ENCODE measurements at regions of chr15 and their contacts with region 1.

Region 1: DNA sequence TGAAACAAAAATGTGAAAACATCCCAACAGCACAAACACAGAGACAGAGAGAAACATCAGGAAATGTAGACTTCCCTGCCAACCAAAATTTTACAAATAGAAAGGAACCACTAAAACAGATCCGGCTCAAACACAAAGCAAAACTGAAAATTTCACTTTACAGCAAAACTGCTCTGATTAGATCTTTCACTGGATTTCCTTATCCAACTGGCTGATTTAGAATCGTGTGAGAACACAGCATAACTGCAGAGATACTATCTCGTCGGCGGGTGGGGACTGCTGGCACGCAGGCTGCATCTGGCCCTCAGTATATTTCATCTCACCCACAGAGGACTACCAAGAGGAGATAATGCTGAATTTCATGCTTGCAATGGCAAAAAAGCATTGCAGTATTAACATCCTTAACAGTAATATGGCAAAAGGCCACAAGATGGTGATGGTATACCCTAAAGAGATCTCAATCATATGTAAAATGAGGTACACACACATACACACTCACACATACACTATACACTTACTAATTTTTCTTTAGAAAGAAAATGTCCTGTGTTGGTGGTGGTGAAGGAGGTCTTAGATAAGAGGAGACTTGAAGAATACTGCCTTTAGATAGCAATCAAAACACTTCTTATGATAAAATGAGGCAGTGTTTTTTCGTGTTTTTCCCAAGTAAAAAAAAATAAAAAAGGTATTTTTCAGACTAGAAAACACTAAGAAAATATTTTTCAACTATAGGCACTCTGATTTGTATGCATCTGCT is 10.6 kb upstream of the LEO1 start:
- DNase-seq: peak in 1 of 2 experiments; percentile 47
- H3K4me3 ChIP-seq: no peak overlapping the region
- H3K4me3 Mint-ChIP-seq: peak overlapping the region; percentile 27
- H3K27ac Mint-ChIP-seq: peak overlapping the region; percentile 42
- H3K4me1 ChIP-seq: no peaks in the 10 kb centered on the region
- H3K4me1 Mint-ChIP-seq: peaks cover 8% of the 10 kb centered on the region
- H3K27me3 ChIP-seq: no peaks in the 10 kb centered on the region
- H3K27me3 Mint-ChIP-seq: no peaks in the 10 kb centered on the region
- CTCF ChIP-seq: peak; percentile 39 to 51

Region 2: DNA sequence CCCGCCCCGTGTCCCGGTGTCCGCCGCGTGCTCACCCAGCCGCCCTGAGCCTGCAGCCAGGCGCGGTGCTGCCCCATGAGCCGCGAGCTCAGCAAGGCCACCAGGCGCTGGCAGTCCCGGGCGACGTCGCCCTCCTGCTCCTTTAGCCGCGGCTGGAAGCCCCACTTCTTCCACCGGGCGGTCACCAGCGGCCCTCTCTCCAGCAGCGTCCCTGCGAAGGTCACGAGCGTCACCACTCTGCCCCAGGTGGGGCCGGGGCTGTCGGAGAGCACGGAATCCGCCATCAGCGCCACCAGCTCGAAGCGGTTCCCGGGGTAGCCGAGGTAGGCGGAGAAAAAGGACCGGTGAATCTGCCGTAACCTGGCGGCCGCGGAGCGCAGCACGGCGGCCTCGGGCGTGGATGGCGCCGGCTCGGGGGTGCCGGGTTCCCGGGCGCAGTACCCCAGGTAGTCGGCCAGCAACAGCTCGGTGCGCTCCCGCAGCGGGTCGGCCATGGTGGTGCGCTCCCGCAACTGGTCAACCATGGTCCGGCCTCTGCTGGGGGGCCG is 130.1 kb after region 1 on chr15:
- CTCF ChIA-PET with region 1: no interaction called
- POLR2A ChIA-PET with region 1: no interaction called
- intact Hi-C with region 1: no loop called
- DNase-seq: peak; percentile 43 to 62
- H3K4me3 ChIP-seq: peak overlapping the region; percentile 65
- H3K4me3 Mint-ChIP-seq: peak overlapping the region; percentile 75
- H3K27ac Mint-ChIP-seq: no peak overlapping the region
- H3K4me1 ChIP-seq: peaks cover 19% of the 10 kb centered on the region
- H3K4me1 Mint-ChIP-seq: peaks cover 11% of the 10 kb centered on the region
- H3K27me3 ChIP-seq: no peaks in the 10 kb centered on the region
- H3K27me3 Mint-ChIP-seq: no peaks in the 10 kb centered on the region
- CTCF ChIP-seq: no peak

Region 3: GRCh38 chr15:52208306-52208946 is 226.2 kb after region 1 on chr15:
- CTCF ChIA-PET with region 1: no interaction called
- POLR2A ChIA-PET with region 1: no interaction called
- intact Hi-C with region 1: loop called (anchors 1 kb)
- DNase-seq: peak; percentile 76 to 83
- H3K4me3 ChIP-seq: no peak overlapping the region
- H3K4me3 Mint-ChIP-seq: no peak overlapping the region
- H3K27ac Mint-ChIP-seq: no peak overlapping the region
- H3K4me1 ChIP-seq: no peaks in the 10 kb centered on the region
- H3K4me1 Mint-ChIP-seq: no peaks in the 10 kb centered on the region
- H3K27me3 ChIP-seq: no peaks in the 10 kb centered on the region
- H3K27me3 Mint-ChIP-seq: no peaks in the 10 kb centered on the region
- CTCF ChIP-seq: peak; percentile 75 to 82

Measured in Caco-2 (cell line).